Right cardiac atrium (tissue), 5 donors: ENCODE measurements at regions of chr3 and their contacts with region 1.

Region 1: GRCh38 chr3:128680602-128681368 is 30.2 kb upstream of the RPN1 start:
- DNase-seq: peak; percentile 100
- ATAC-seq: peak; percentile 99 to 100
- H3K4me3 ChIP-seq: peak overlapping the region; percentile 66
- H3K27ac ChIP-seq: peak overlapping the region; percentile 98
- H3K4me1 ChIP-seq: no peaks in the 10 kb centered on the region
- H3K27me3 ChIP-seq: no peaks in the 10 kb centered on the region

Region 2: GRCh38 chr3:128603811-128604775 is 76.7 kb before region 1 on chr3:
- intact Hi-C with region 1: no loop called
- DNase-seq: no peak
- ATAC-seq: no peak
- H3K4me3 ChIP-seq: no peak overlapping the region
- H3K27ac ChIP-seq: no peak overlapping the region
- H3K4me1 ChIP-seq: no peaks in the 10 kb centered on the region
- H3K27me3 ChIP-seq: no peaks in the 10 kb centered on the region

Region 3: DNA sequence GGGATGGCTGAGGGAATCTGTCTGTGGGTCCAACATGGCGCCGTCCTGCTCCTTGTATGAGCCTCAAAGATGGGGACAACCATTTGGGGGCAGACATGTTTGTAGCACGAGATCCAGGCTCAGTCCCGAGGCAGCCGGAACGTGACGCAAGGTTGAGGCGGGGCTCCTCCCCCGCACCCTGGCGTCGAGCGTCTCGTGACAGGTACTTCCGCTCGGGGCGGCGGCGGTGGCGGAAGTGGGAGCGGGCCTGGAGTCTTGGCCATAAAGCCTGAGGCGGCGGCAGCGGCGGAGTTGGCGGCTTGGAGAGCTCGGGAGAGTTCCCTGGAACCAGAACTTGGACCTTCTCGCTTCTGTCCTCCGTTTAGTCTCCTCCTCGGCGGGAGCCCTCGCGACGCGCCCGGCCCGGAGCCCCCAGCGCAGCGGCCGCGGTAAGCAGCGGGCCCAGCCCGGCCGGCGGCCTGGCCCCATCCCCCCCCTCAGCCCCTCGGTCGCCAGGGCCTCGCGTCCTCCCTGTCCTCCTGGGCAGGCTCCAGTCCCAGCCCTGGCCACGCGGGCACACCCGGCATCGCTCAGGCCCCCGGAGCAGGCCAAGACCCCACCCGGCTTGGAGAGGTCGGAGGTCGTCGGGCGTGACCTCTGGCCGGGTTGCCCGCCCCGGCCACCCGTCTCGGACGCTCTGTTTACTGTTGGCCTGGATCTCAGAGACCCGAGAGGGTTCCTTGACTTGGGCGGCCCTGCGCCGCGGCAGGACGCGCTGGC is 45.3 kb after region 1 on chr3 and contains the start of gene RAB7A:
- intact Hi-C with region 1: loop called in 1 of 4 experiments (anchors 5 kb)
- DNase-seq: peak; percentile 98 to 99 (median 99)
- ATAC-seq: peak; percentile 98 to 99
- H3K4me3 ChIP-seq: peak within 1 kb of the TSS; percentile 76
- H3K27ac ChIP-seq: peak within 1 kb of the TSS; percentile 86
- H3K4me1 ChIP-seq: peaks cover 7% of the 10 kb centered on the region
- H3K27me3 ChIP-seq: no peaks in the 10 kb centered on the region
- total RNA-seq, gene RAB7A: 228 to 242 (median 238) TPM

Region 4: GRCh38 chr3:128794770-128795649 is 114.2 kb after region 1 on chr3:
- intact Hi-C with region 1: loop called in 3 of 4 experiments (anchors 5 to 10 kb)
- DNase-seq: peak; percentile 33 to 72 (median 55)
- ATAC-seq: peak; percentile 91 to 92
- H3K4me3 ChIP-seq: no peak overlapping the region
- H3K27ac ChIP-seq: no peak overlapping the region
- H3K4me1 ChIP-seq: peaks cover 10% of the 10 kb centered on the region
- H3K27me3 ChIP-seq: no peaks in the 10 kb centered on the region